ENCODE measurements at regions of chr4 and their contacts with region 1.

Region 1: GRCh38 chr4:118173956-118174725 is 139.9 kb downstream of the NDST3 start:
- DNase-seq: no peak
- H3K4me3 Mint-ChIP-seq: no peak overlapping the region
- H3K27ac Mint-ChIP-seq: no peak overlapping the region
- H3K4me1 Mint-ChIP-seq: peaks cover 40% of the 10 kb centered on the region
- H3K27me3 Mint-ChIP-seq: no peaks in the 10 kb centered on the region

Region 2: GRCh38 chr4:117916728-117917127 is 257.4 kb before region 1 on chr4:
- intact Hi-C with region 1: no loop called
- DNase-seq: no peak
- H3K4me3 Mint-ChIP-seq: no peak overlapping the region
- H3K27ac Mint-ChIP-seq: no peak overlapping the region
- H3K4me1 Mint-ChIP-seq: no peaks in the 10 kb centered on the region
- H3K27me3 Mint-ChIP-seq: no peaks in the 10 kb centered on the region

Region 3: GRCh38 chr4:118154649-118155048 is 19.5 kb before region 1 on chr4:
- intact Hi-C with region 1: loop called (anchors 2 kb)
- DNase-seq: no peak
- H3K4me3 Mint-ChIP-seq: no peak overlapping the region
- H3K27ac Mint-ChIP-seq: no peak overlapping the region
- H3K4me1 Mint-ChIP-seq: peaks cover 20% of the 10 kb centered on the region
- H3K27me3 Mint-ChIP-seq: no peaks in the 10 kb centered on the region

Region 4: DNA sequence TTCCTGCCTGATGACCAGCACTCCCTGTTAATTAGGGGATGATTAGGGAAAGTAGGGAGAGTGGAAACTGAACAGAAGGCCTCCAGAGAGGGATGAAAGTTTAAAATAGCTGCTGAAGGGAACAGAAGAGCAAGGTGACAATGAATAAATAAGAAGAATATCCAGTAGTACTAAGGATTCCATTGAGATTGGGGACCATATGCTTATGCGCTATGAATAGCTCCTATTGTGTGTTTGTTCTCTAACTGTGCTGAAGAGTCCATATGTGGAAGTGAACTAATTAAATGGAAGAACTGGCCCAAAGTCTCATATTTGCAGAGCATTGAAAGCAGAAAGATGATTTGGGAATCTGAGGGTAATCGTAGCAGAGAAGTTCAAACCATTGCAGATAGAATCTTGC is 41.7 kb after region 1 on chr4:
- intact Hi-C with region 1: loop called (anchors 5 kb)
- DNase-seq: no peak
- H3K4me3 Mint-ChIP-seq: no peak overlapping the region
- H3K27ac Mint-ChIP-seq: no peak overlapping the region
- H3K4me1 Mint-ChIP-seq: no peaks in the 10 kb centered on the region
- H3K27me3 Mint-ChIP-seq: peaks cover 3% of the 10 kb centered on the region

Region 5: DNA sequence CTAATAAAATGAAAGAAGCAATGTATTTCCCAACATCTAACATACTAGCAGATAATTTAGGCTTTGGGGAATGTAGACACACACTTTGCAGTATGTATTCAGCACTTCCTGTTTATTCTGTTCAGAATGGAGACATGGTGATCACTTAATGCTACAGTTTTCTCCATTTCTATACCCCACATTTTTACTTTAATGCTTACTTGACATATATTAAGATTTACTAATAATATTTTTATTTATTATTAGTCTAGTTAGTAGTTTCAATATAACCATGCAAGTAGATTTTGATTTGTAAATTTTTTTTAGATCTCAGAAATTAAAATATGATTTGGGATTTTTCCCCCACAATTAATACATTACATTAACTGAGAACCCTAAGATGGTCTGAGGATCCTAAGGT is 80.2 kb after region 1 on chr4:
- intact Hi-C with region 1: no loop called
- DNase-seq: no peak
- H3K4me3 Mint-ChIP-seq: no peak overlapping the region
- H3K27ac Mint-ChIP-seq: no peak overlapping the region
- H3K4me1 Mint-ChIP-seq: no peaks in the 10 kb centered on the region
- H3K27me3 Mint-ChIP-seq: no peaks in the 10 kb centered on the region